CD8-positive, alpha-beta memory T cell (primary cell): ENCODE measurements at regions of chr17 and their contacts with region 1.

Region 1: GRCh38 chr17:47733047-47733673 is at the start of gene TBX21:
- DNase-seq: peak; percentile 74 to 95 (median 88)
- H3K4me3 ChIP-seq: peak within 1 kb of the TSS; percentile 72
- H3K4me3 Mint-ChIP-seq: peak within 1 kb of the TSS; percentile 96 to 100 (median 99)
- H3K27ac ChIP-seq: peak within 1 kb of the TSS; percentile 82
- H3K27ac Mint-ChIP-seq: peak within 1 kb of the TSS; percentile 92 to 99 (median 99)
- H3K4me1 ChIP-seq: peaks cover 40% of the 10 kb centered on the region
- H3K4me1 Mint-ChIP-seq: peaks cover 56 to 73% (median 67%) of the 10 kb centered on the region in 3 donors
- H3K27me3 ChIP-seq: no peaks in the 10 kb centered on the region
- H3K27me3 Mint-ChIP-seq: peaks cover 0 to under 1% of the 10 kb centered on the region in 2 donors
- total RNA-seq, gene TBX21: 37.8 to 39.8 TPM

Region 2: DNA sequence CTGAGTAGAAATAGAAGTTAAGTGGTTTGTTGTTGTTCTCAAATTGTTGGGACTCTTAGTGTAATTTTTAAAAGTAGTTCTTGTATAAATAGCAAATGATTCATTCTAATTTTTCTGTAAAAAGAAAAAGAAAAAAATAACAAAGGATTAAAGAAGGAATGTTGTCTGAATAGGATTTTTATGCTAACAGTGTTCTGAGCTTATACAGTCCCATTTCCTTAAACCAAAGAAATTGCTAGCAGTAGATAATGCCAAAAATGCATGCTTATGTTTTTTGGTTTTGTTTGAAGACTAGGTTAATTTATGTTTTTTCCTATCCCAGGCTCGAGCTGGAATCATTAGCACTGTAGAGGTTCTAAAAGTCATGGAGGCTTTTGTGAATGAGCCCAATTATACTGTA is 128.1 kb before region 1 on chr17:
- CTCF ChIA-PET with region 1: no interaction called
- POLR2A ChIA-PET with region 1: no interaction called
- DNase-seq: no peak
- H3K4me3 ChIP-seq: no peak overlapping the region
- H3K4me3 Mint-ChIP-seq: no peak overlapping the region
- H3K27ac ChIP-seq: no peak overlapping the region
- H3K27ac Mint-ChIP-seq: no peak overlapping the region
- H3K4me1 ChIP-seq: no peaks in the 10 kb centered on the region
- H3K4me1 Mint-ChIP-seq: peaks cover 0 to 4% (median 0%) of the 10 kb centered on the region in 3 donors
- H3K27me3 ChIP-seq: no peaks in the 10 kb centered on the region
- H3K27me3 Mint-ChIP-seq: no peaks in the 10 kb centered on the region

Region 3: GRCh38 chr17:47698749-47699535 is 34.2 kb before region 1 on chr17:
- CTCF ChIA-PET with region 1: interaction called, 77 read pairs
- POLR2A ChIA-PET with region 1: interaction called, 20 read pairs
- DNase-seq: peak; percentile 63 to 85 (median 72)
- H3K4me3 ChIP-seq: no peak overlapping the region
- H3K4me3 Mint-ChIP-seq: peak overlapping the region in 4 of 7 donors; percentile 22 to 84 (median 32)
- H3K27ac ChIP-seq: no peak overlapping the region
- H3K27ac Mint-ChIP-seq: peak overlapping the region in 7 of 8 donors; percentile 1 to 89 (median 63)
- H3K4me1 ChIP-seq: peaks cover 59% of the 10 kb centered on the region
- H3K4me1 Mint-ChIP-seq: peaks cover 58 to 74% (median 59%) of the 10 kb centered on the region in 3 donors
- H3K27me3 ChIP-seq: no peaks in the 10 kb centered on the region
- H3K27me3 Mint-ChIP-seq: peaks cover 0 to 2% of the 10 kb centered on the region in 2 donors

Region 4: DNA sequence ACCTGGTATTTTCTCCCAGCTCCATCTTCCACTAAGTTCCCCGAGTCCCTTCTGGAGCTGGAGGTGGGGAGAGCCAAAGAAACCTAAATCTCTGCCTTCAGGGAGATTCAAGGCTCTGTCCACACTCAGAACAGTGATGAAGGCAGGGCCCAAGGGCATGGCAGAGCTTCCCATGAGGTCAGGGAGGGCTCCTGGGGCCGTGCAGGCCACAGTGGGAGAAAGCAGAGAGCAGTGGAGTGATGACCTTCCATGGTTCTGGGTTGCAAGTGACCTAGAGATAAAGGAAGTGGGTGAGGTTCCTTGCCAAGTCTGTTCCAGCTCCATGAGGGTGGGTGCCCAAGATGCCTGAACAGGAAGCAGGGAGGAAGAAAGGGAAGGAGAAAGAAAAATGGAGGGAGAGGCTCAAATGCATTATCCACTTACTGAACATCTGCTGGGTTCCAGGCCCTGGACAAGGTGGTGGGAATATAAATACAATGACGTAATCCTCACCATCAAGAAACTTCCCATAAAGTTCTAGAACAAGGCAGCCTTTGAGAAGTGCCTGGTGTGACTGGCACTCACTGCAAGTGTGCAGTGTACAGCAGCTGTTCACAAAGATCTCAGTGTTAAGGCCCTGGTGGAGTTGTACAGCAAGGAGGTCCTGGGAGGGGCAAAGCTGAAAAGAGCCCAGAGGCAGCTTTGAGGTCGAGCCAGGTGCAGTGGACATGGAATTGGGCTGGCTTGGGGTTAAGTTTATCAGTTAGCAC is 25.9 kb before region 1 on chr17:
- CTCF ChIA-PET with region 1: interaction called, 77 read pairs
- POLR2A ChIA-PET with region 1: interaction called, 20 read pairs
- DNase-seq: no peak
- H3K4me3 ChIP-seq: no peak overlapping the region
- H3K4me3 Mint-ChIP-seq: peak overlapping the region; percentile 67 to 85 (median 80)
- H3K27ac ChIP-seq: no peak overlapping the region
- H3K27ac Mint-ChIP-seq: peak overlapping the region in 7 of 8 donors; percentile 8 to 97 (median 94)
- H3K4me1 ChIP-seq: peaks cover 71% of the 10 kb centered on the region
- H3K4me1 Mint-ChIP-seq: peaks cover 63 to 69% (median 68%) of the 10 kb centered on the region in 3 donors
- H3K27me3 ChIP-seq: no peaks in the 10 kb centered on the region
- H3K27me3 Mint-ChIP-seq: no peaks in the 10 kb centered on the region

Region 5: GRCh38 chr17:47717261-47717697 is 15.9 kb before region 1 on chr17:
- CTCF ChIA-PET with region 1: interaction called, 26 read pairs
- POLR2A ChIA-PET with region 1: interaction called, 21 read pairs
- DNase-seq: no peak
- H3K4me3 ChIP-seq: no peak overlapping the region
- H3K4me3 Mint-ChIP-seq: peak overlapping the region in 5 of 7 donors; percentile 57 to 78 (median 77)
- H3K27ac ChIP-seq: no peak overlapping the region
- H3K27ac Mint-ChIP-seq: peak overlapping the region in 7 of 8 donors; percentile 17 to 91 (median 54)
- H3K4me1 ChIP-seq: peaks cover 96% of the 10 kb centered on the region
- H3K4me1 Mint-ChIP-seq: peaks cover 93 to 97% (median 95%) of the 10 kb centered on the region in 3 donors
- H3K27me3 ChIP-seq: peaks cover 3% of the 10 kb centered on the region
- H3K27me3 Mint-ChIP-seq: no peaks in the 10 kb centered on the region

Region 6: GRCh38 chr17:47760409-47761140 is 27.4 kb after region 1 on chr17:
- CTCF ChIA-PET with region 1: interaction called, 3 read pairs
- POLR2A ChIA-PET with region 1: interaction called, 12 read pairs
- DNase-seq: no peak
- H3K4me3 ChIP-seq: no peak overlapping the region
- H3K4me3 Mint-ChIP-seq: no peak overlapping the region
- H3K27ac ChIP-seq: no peak overlapping the region
- H3K27ac Mint-ChIP-seq: no peak overlapping the region
- H3K4me1 ChIP-seq: peaks cover 16% of the 10 kb centered on the region
- H3K4me1 Mint-ChIP-seq: peaks cover 19 to 23% (median 23%) of the 10 kb centered on the region in 3 donors
- H3K27me3 ChIP-seq: no peaks in the 10 kb centered on the region
- H3K27me3 Mint-ChIP-seq: no peaks in the 10 kb centered on the region

Region 7: DNA sequence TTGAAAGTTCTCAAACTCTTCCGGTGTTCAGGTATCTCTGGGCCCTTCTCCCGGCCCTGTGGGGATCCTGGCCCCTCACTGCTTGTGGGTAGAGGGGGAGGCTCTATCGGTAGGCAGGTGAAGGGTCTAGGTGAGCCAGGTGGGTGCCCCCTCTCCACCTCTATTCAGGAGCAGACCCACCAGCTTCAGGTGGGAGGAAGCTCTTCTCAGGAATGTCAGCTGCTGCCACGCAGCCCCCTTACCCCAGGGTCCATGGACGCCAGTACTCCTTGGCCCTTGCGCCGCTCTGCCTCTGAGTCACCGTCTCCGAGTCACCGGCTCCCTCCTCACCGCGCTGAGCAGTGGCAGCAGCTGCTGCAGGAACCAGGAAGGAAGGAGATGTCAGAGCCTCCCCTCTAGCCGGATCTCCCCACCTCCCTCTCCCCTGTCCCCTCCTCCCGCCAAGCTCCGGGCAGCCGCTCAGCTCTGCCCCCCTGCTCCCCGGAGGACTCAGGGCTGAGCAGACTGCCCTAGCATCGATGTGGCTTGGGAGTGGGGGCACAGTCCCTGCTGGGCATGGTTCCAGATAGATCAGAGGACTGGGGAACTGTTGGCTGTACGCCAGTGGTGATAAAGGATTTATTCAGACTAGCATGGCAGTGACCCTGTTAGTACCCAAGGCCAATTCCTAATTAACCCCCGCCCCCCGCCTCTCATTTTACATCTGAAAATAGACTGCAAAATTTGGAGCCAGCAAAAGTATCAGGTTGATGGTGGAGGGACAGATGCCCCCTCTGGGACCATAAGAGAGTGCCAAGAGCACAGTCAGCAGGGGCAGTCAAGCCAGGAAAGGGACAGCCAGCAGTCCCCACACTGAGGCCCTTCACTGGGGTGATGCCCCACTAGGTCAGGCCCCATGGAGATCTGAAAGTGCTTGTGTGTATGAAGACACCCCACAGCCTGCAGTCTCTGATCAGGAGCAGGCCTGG is 88.5 kb after region 1 on chr17 and contains the start of gene OSBPL7:
- CTCF ChIA-PET with region 1: no interaction called
- POLR2A ChIA-PET with region 1: interaction called, 13 read pairs
- DNase-seq: peak; percentile 66 to 87 (median 74)
- H3K4me3 ChIP-seq: peak within 1 kb of the TSS; percentile 93
- H3K4me3 Mint-ChIP-seq: peak within 1 kb of the TSS; percentile 88 to 98 (median 97)
- H3K27ac ChIP-seq: peak within 1 kb of the TSS; percentile 79
- H3K27ac Mint-ChIP-seq: peak within 1 kb of the TSS; percentile 88 to 98 (median 95)
- H3K4me1 ChIP-seq: peaks cover 26% of the 10 kb centered on the region
- H3K4me1 Mint-ChIP-seq: peaks cover 25 to 45% (median 25%) of the 10 kb centered on the region in 3 donors
- H3K27me3 ChIP-seq: no peaks in the 10 kb centered on the region
- H3K27me3 Mint-ChIP-seq: no peaks in the 10 kb centered on the region
- total RNA-seq, gene OSBPL7: 16.9 to 17.5 TPM

Region 8: DNA sequence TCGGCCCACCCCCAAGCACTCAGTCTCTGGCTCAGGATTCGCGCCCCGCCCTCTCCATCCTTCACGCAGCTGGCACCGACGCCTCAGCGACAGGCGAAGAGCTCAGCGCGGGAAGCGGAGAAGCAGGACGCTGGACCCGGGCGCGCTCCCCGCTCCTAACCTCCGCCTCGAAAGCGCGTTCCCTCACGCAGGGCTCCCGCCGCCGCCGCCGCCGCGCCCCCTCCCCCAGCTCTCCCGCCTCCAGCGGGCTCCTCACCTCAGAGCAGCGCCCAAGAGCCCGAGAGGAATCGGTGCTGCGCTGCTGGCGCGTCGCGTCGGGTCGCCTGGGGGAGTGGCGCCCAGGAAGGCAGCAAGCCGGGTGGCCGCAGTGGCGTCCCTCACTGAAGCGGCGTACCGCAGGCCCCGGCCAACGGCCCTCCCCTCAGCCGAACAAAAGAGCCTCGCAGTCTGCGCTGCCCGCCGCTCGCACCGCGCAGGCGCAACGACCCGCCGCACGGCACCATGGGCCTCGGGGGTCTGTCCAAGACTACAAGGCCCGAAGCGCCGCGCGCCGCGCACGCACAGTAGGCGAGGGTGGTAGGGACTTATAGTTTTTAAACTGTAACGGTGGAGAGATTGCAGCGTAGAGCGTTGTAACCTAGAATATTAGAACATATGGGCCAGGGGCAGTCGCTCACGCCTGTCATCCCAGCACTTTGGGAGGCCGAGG is 368.0 kb after region 1 on chr17 and contains the start of gene CBX1:
- CTCF ChIA-PET with region 1: no interaction called
- POLR2A ChIA-PET with region 1: no interaction called
- DNase-seq: peak; percentile 87 to 95 (median 90)
- H3K4me3 ChIP-seq: peak within 1 kb of the TSS; percentile 73
- H3K4me3 Mint-ChIP-seq: peak within 1 kb of the TSS; percentile 82 to 98 (median 90)
- H3K27ac ChIP-seq: peak within 1 kb of the TSS; percentile 38
- H3K27ac Mint-ChIP-seq: peak within 1 kb of the TSS; percentile 21 to 96 (median 83)
- H3K4me1 ChIP-seq: peaks cover 7% of the 10 kb centered on the region
- H3K4me1 Mint-ChIP-seq: peaks cover 28 to 48% (median 46%) of the 10 kb centered on the region in 3 donors
- H3K27me3 ChIP-seq: no peaks in the 10 kb centered on the region
- H3K27me3 Mint-ChIP-seq: peaks cover 0 to 6% of the 10 kb centered on the region in 2 donors
- total RNA-seq, gene CBX1: 63.1 to 65.1 TPM